ENCODE measurements at regions of chr5 and their contacts with region 1.

Region 1: DNA sequence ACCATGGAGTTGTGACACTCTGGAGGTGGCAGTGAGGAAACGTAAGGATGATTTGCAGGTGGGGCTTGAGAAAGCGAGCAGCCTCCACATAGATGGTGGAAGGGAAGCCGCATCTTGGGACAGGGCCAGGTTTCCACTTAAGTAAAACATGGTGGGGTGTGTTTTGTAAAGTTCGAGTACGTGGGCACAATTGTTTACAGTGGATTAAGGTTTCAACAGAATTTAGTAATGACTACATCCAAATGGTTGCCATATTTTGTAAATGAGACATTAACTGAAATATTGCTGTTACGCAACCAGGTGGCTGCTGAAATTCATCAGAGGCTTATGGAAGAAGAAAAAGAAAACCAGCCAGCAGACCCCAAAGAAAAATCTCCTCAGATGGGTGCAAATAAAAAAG is 85.4 kb upstream of the IL7R start:
- DNase-seq: peak; percentile 40
- H3K4me3 Mint-ChIP-seq: no peak overlapping the region
- H3K27ac Mint-ChIP-seq: no peak overlapping the region
- H3K4me1 Mint-ChIP-seq: peaks cover 20% of the 10 kb centered on the region
- H3K27me3 Mint-ChIP-seq: no peaks in the 10 kb centered on the region

Region 2: DNA sequence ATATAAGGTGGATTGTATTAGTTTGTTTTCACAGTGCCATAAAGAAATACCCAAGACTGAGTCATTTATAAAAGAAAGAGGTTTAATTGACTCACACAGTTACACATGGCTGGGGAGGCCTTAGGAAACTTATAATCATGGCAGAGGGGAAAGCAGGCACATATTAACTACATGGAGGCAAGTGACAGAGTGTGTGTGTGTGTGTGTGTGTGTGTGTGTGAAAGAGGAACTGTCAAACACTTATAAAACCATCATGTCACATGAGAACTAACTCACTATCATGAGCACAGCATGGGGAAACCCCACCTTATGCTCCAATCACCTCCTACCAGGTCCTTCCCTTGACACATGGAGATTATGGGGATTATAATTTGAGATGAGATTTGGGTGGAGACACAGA is 35.0 kb before region 1 on chr5:
- intact Hi-C with region 1: loop called (anchors 5 kb)
- DNase-seq: peak; percentile 54
- H3K4me3 Mint-ChIP-seq: no peak overlapping the region
- H3K27ac Mint-ChIP-seq: peak overlapping the region; percentile 41
- H3K4me1 Mint-ChIP-seq: peaks cover 20% of the 10 kb centered on the region
- H3K27me3 Mint-ChIP-seq: no peaks in the 10 kb centered on the region

Region 3: DNA sequence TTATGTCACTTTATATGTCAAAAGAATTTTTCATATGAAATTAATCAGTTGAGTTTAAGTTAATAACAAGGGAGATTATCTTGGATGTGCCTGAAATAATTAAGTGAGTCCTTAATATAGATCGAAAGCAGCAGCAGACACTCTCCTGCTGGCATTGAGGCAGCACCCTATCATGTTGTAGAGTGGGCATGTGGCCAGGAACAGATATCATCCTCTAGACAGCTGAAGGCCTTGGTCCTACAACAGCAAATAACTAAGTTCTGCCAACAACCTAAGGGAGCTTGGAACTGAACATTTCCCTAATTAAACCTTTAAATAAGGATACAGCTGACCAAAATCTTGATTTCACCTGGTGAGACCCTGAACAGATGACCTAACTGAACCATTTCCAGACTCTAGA is 245.7 kb after region 1 on chr5:
- intact Hi-C with region 1: no loop called
- DNase-seq: no peak
- H3K4me3 Mint-ChIP-seq: no peak overlapping the region
- H3K27ac Mint-ChIP-seq: no peak overlapping the region
- H3K4me1 Mint-ChIP-seq: no peaks in the 10 kb centered on the region
- H3K27me3 Mint-ChIP-seq: no peaks in the 10 kb centered on the region